ENCODE measurements at regions of chr3 and their contacts with region 1.

Region 1: GRCh38 chr3:160099834-160100233 is 111.2 kb downstream of the IL12A start:
- DNase-seq: no peak
- H3K4me3 ChIP-seq: no peak overlapping the region
- CTCF ChIP-seq: no peak
- POLR2A ChIP-seq: no peak

Region 2: DNA sequence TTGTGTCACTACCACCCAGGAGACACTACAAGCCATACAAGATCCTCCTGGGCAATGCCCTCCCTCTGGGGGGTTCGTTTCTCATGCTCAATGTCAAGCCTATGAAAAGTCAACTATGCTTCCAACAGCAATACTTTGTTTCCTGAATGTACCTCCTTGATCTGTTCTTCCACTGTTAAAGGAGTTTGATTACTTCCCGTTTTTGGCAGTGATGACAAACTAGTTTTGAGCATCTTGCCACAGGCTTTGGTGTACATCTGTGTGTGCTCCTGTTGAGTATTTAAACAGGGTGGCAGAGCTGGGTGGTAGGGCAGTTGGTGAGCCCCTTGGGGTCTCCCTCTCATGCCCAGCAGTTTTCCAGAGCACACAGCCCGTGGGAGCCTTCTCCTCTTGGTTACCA is 29.8 kb before region 1 on chr3:
- intact Hi-C with region 1: no loop called
- DNase-seq: no peak
- H3K4me3 ChIP-seq: no peak overlapping the region
- CTCF ChIP-seq: no peak
- POLR2A ChIP-seq: no peak

Region 3: DNA sequence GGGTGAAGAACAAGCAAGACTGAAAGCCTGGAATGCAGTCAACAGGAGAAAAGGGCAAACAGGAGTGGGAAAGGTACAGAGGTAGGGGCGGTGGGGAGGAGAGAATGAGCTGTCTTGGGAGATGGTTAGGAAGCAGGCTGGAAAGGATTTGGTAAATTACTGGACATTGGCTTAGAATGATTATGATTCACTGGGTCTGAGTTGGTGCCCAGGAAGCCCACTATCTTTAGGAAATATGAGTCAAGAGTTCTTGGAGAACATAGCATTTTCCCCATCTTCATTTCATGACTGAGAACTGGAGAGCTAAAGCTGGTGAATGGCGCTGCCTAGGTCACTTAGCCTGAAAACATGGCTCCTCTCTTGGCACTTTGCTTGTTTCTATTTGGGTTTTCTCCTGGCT is 50.7 kb after region 1 on chr3:
- intact Hi-C with region 1: no loop called
- DNase-seq: no peak
- H3K4me3 ChIP-seq: no peak overlapping the region
- CTCF ChIP-seq: no peak
- POLR2A ChIP-seq: no peak

Region 4: GRCh38 chr3:161149529-161149928 is 1049.7 kb after region 1 on chr3:
- intact Hi-C with region 1: loop called (anchors 5 kb)
- DNase-seq: no peak
- H3K4me3 ChIP-seq: no peak overlapping the region
- CTCF ChIP-seq: no peak
- POLR2A ChIP-seq: no peak

Measured in lower leg skin (tissue), 4 donors.